ENCODE measurements at regions of chr19 and their contacts with region 1.

Region 1: GRCh38 chr19:15555759-15556633 is 47.7 kb downstream of the CYP4F22 start:
- DNase-seq: peak; percentile 96
- H3K4me3 ChIP-seq: peak overlapping the region; percentile 39
- H3K4me3 Mint-ChIP-seq: peak overlapping the region; percentile 85
- H3K27ac Mint-ChIP-seq: peak overlapping the region; percentile 84
- H3K4me1 ChIP-seq: no peaks in the 10 kb centered on the region; the same call in 1 of the 2 replicates
- H3K4me1 Mint-ChIP-seq: peaks cover 14% of the 10 kb centered on the region
- H3K27me3 ChIP-seq: no peaks in the 10 kb centered on the region
- H3K27me3 Mint-ChIP-seq: no peaks in the 10 kb centered on the region
- CTCF ChIP-seq: peak; percentile 68 to 79

Region 2: DNA sequence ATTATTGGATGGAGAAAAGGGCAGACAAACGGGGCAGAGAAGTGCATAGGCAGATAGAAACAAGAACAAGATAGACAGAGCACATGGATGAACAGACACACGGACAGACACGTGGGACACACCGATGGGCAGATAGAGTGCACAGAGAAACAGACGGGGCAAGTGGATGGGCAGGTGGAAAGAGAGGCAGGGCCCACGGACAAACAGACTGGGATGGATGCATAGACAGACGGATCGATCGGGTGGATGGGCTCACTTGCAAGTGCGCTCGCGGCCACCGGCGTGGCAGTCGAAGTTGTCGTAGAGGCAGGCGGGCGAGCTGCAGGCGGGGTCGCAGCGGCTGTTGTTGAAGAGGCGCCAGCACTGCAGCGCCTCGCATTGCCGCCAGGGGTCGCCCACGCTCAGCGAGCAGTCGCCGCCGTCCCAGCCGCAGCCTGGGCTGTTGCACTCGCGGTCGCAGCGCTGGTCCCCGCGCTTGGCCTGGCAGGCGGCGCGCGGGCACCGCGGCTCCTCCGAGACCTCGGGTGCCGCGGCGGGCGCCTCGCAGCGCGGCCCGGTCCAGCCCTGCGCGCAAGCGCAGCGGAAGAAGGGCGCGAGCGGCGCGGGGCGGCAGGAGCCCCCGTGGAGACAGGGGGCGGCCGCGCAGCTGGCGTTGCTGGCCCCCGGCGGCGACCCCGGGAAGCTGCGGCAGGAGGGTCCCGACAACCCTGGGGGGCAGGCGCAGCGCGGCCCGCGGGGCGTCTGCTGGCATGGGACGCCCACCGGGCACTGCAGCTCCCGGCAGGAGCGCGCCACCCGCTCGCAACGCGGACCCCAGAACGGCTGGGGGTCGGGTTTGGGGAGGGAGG is 378.5 kb before region 1 on chr19:
- CTCF ChIA-PET with region 1: interaction called, 16 read pairs
- POLR2A ChIA-PET with region 1: no interaction called
- intact Hi-C with region 1: no loop called
- DNase-seq: peak in 1 of 2 experiments; percentile 66
- H3K4me3 ChIP-seq: no peak overlapping the region
- H3K4me3 Mint-ChIP-seq: no peak overlapping the region
- H3K27ac Mint-ChIP-seq: no peak overlapping the region
- H3K4me1 ChIP-seq: no peaks in the 10 kb centered on the region
- H3K4me1 Mint-ChIP-seq: no peaks in the 10 kb centered on the region
- H3K27me3 ChIP-seq: no peaks in the 10 kb centered on the region
- H3K27me3 Mint-ChIP-seq: no peaks in the 10 kb centered on the region
- CTCF ChIP-seq: peak; percentile 43 to 70

Region 3: GRCh38 chr19:15264061-15264932 is 291.7 kb before region 1 on chr19:
- CTCF ChIA-PET with region 1: interaction called, 4 read pairs
- POLR2A ChIA-PET with region 1: no interaction called
- intact Hi-C with region 1: loop called (anchors 5 kb)
- DNase-seq: peak; percentile 68 to 84
- H3K4me3 ChIP-seq: no peak overlapping the region
- H3K4me3 Mint-ChIP-seq: no peak overlapping the region
- H3K27ac Mint-ChIP-seq: no peak overlapping the region
- H3K4me1 ChIP-seq: no peaks in the 10 kb centered on the region
- H3K4me1 Mint-ChIP-seq: peaks cover 21% of the 10 kb centered on the region
- H3K27me3 ChIP-seq: no peaks in the 10 kb centered on the region
- H3K27me3 Mint-ChIP-seq: no peaks in the 10 kb centered on the region
- CTCF ChIP-seq: peak; percentile 70 to 77

Region 4: DNA sequence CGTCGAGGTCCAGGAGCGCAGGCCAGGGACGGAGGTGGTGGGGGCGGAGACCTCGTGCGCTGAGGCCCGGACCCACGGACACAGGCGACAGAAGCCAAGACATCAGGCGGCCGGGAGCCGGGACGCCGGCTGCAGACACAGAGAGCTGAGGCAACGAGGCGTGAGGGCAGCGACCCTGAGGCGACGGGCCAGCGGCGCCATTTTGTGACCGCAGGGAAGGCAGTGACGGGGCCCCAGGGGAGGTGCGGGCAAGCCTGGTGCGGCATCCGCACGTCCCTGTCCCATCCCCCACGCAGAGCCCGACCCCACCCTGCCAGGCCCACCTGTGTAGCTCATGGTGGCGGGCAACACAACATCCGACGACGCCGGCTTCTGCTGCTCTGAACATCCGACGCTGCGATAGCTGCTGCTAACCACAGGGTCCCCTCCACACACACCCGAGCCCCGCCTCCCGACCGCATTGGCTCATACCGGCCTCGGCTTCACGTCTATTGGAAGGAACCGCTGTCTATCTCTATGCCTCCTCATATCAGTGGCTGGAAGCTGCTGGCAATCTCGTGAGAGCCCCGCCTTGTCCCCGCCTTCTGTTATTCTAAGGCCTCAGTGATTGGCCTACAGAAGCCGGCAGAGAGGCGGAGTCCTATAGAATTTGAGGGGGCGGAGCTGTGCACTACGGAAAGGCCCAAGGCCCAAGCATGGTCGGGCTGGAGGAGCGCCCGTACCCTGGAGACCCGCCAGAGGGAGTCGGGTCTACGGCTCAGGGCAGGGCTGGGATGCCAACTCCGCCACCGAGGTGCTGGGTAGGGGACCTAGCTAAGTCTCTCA is 137.2 kb before region 1 on chr19 and contains the start of gene AKAP8L:
- CTCF ChIA-PET with region 1: interaction called, 61 read pairs
- POLR2A ChIA-PET with region 1: interaction called, 12 read pairs
- intact Hi-C with region 1: loop called (anchors 1 kb)
- DNase-seq: peak; percentile 98 to 99
- H3K4me3 ChIP-seq: peak within 1 kb of the TSS; percentile 89
- H3K4me3 Mint-ChIP-seq: peak within 1 kb of the TSS; percentile 96
- H3K27ac Mint-ChIP-seq: peak within 1 kb of the TSS; percentile 98
- H3K4me1 ChIP-seq: peaks cover 6% of the 10 kb centered on the region; the same call in 1 of the 2 replicates
- H3K4me1 Mint-ChIP-seq: peaks cover 6% of the 10 kb centered on the region
- H3K27me3 ChIP-seq: no peaks in the 10 kb centered on the region
- H3K27me3 Mint-ChIP-seq: no peaks in the 10 kb centered on the region
- CTCF ChIP-seq: peak; percentile 70 to 92
- total RNA-seq, gene AKAP8L: 112 and 127 TPM in 2 replicates

Region 5: GRCh38 chr19:15479391-15480345 is 76.3 kb before region 1 on chr19 and contains the start of gene PGLYRP2:
- CTCF ChIA-PET with region 1: interaction called, 4 read pairs
- POLR2A ChIA-PET with region 1: no interaction called
- intact Hi-C with region 1: loop called (anchors 1 kb)
- DNase-seq: no peak
- H3K4me3 ChIP-seq: no peak within 1 kb of the TSS
- H3K4me3 Mint-ChIP-seq: no peak within 1 kb of the TSS
- H3K27ac Mint-ChIP-seq: no peak within 1 kb of the TSS
- H3K4me1 ChIP-seq: no peaks in the 10 kb centered on the region
- H3K4me1 Mint-ChIP-seq: no peaks in the 10 kb centered on the region
- H3K27me3 ChIP-seq: no peaks in the 10 kb centered on the region
- H3K27me3 Mint-ChIP-seq: no peaks in the 10 kb centered on the region
- CTCF ChIP-seq: peak in 1 of 2 experiments; percentile 46
- total RNA-seq, gene PGLYRP2: not detected in 2 replicates

Region 6: GRCh38 chr19:15532779-15533521 is 23.0 kb before region 1 on chr19:
- CTCF ChIA-PET with region 1: no interaction called
- POLR2A ChIA-PET with region 1: no interaction called
- intact Hi-C with region 1: no loop called
- DNase-seq: no peak
- H3K4me3 ChIP-seq: no peak overlapping the region
- H3K4me3 Mint-ChIP-seq: no peak overlapping the region
- H3K27ac Mint-ChIP-seq: no peak overlapping the region
- H3K4me1 ChIP-seq: no peaks in the 10 kb centered on the region
- H3K4me1 Mint-ChIP-seq: no peaks in the 10 kb centered on the region
- H3K27me3 ChIP-seq: no peaks in the 10 kb centered on the region
- H3K27me3 Mint-ChIP-seq: peaks cover 14% of the 10 kb centered on the region
- CTCF ChIP-seq: no peak

Region 7: GRCh38 chr19:15577184-15577771 is 21.3 kb after region 1 on chr19:
- CTCF ChIA-PET with region 1: no interaction called
- POLR2A ChIA-PET with region 1: no interaction called
- intact Hi-C with region 1: no loop called
- DNase-seq: no peak
- H3K4me3 ChIP-seq: no peak overlapping the region
- H3K4me3 Mint-ChIP-seq: no peak overlapping the region
- H3K27ac Mint-ChIP-seq: no peak overlapping the region
- H3K4me1 ChIP-seq: no peaks in the 10 kb centered on the region
- H3K4me1 Mint-ChIP-seq: no peaks in the 10 kb centered on the region
- H3K27me3 ChIP-seq: peaks cover 2% of the 10 kb centered on the region
- H3K27me3 Mint-ChIP-seq: peaks cover 17% of the 10 kb centered on the region
- CTCF ChIP-seq: no peak

Region 8: GRCh38 chr19:15612338-15612737 is 56.3 kb after region 1 on chr19:
- CTCF ChIA-PET with region 1: no interaction called
- POLR2A ChIA-PET with region 1: no interaction called
- intact Hi-C with region 1: no loop called
- DNase-seq: no peak
- H3K4me3 ChIP-seq: no peak overlapping the region
- H3K4me3 Mint-ChIP-seq: no peak overlapping the region
- H3K27ac Mint-ChIP-seq: no peak overlapping the region
- H3K4me1 ChIP-seq: no peaks in the 10 kb centered on the region
- H3K4me1 Mint-ChIP-seq: peaks cover 5% of the 10 kb centered on the region
- H3K27me3 ChIP-seq: no peaks in the 10 kb centered on the region
- H3K27me3 Mint-ChIP-seq: peaks cover 4% of the 10 kb centered on the region
- CTCF ChIP-seq: no peak